Activated CD4-positive, alpha-beta T cell treated with anti-CD3 and anti-CD28 coated beads for 36 hours (primary cell): ENCODE measurements at regions of chr11 and their contacts with region 1.

Region 1: GRCh38 chr11:48366365-48366764 is at the start of gene OR4C5:
- DNase-seq: no peak
- ATAC-seq: no peak
- H3K4me3 Mint-ChIP-seq: no peak within 1 kb of the TSS
- H3K27ac Mint-ChIP-seq: no peak within 1 kb of the TSS
- H3K4me1 Mint-ChIP-seq: no peaks in the 10 kb centered on the region
- H3K27me3 Mint-ChIP-seq: peaks cover 3% of the 10 kb centered on the region
- total RNA-seq, gene OR4C5: not detected

Region 2: GRCh38 chr11:48248902-48249301 is 117.5 kb before region 1 on chr11:
- CTCF ChIA-PET with region 1: no interaction called
- POLR2A ChIA-PET with region 1: no interaction called
- intact Hi-C with region 1: no loop called
- DNase-seq: no peak
- ATAC-seq: no peak
- H3K4me3 Mint-ChIP-seq: no peak overlapping the region
- H3K27ac Mint-ChIP-seq: no peak overlapping the region
- H3K4me1 Mint-ChIP-seq: no peaks in the 10 kb centered on the region
- H3K27me3 Mint-ChIP-seq: peaks cover 10% of the 10 kb centered on the region

Region 3: DNA sequence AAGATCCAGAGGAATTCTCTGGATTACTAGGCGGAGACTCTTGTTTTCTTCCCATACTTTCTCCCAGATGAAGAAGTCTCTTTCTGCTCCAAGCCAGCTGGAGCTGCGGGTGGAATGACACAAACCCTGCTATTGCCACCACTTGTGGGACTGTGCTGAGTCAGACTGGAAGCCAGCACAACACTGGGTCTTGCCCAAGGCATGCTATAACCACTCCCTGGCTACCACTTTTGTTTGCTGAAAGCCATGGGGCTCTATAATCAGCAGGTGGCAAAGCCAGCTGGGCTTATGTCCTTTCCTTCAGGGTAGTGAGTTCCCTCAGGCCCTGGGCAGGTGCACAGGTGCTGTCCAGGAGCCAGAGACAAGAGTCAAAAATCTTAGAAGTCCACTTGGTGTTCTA is 51.3 kb before region 1 on chr11:
- CTCF ChIA-PET with region 1: no interaction called
- POLR2A ChIA-PET with region 1: no interaction called
- intact Hi-C with region 1: loop called in 1 of 2 experiments (anchors 10 kb)
- DNase-seq: no peak
- ATAC-seq: no peak
- H3K4me3 Mint-ChIP-seq: no peak overlapping the region
- H3K27ac Mint-ChIP-seq: no peak overlapping the region
- H3K4me1 Mint-ChIP-seq: no peaks in the 10 kb centered on the region
- H3K27me3 Mint-ChIP-seq: peaks cover 9% of the 10 kb centered on the region

Region 4: GRCh38 chr11:48341466-48341865 is 24.9 kb before region 1 on chr11:
- CTCF ChIA-PET with region 1: no interaction called
- POLR2A ChIA-PET with region 1: no interaction called
- intact Hi-C with region 1: loop called in 1 of 2 experiments (anchors 1 kb)
- DNase-seq: no peak
- ATAC-seq: no peak
- H3K4me3 Mint-ChIP-seq: no peak overlapping the region
- H3K27ac Mint-ChIP-seq: no peak overlapping the region
- H3K4me1 Mint-ChIP-seq: peaks cover 20% of the 10 kb centered on the region
- H3K27me3 Mint-ChIP-seq: no peaks in the 10 kb centered on the region